Head of caudate nucleus (tissue), 42 donors: ENCODE measurements at regions of chr12 and their contacts with region 1.

Region 1: DNA sequence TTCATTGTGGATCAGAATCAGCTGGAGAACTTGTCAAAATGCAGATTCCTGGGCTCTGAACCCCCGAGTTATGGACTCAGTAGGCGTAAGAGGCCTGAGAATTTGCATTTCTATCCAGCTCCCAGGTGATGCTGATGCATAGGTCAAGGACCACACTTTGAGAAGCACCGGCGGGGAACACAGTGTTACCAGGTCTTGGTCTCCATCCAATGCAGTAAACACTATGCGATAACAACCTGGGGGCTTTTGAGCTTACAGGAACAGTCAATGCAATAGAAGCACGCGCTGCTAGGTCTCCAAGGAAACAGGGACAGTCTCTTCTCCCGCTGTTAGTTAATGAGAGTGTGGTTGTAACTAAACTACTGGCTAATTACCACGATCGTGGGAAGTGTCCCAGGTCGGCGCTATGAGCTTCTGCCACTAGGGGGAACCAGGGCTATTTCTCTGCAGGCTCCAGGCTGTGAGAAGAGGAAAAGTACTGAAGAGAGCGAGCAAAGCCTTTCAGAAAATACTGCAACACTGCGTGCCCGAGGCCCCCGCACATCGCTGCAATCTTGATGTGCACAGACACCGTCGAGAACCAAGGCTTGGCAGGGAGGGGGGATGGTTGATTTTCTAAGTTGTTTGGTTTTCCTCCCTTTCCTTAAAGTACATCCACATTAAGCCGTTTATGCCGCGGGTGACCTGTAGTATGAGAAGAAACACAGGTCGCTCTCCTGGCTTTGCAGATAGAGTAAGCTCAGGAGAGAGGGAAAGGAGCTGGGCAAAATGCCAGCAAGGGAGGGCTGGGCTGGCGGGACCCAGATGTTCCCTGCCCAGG is 52.0 kb upstream of the KCNA1 start:
- DNase-seq: peak; percentile 78 to 95 (median 88)

Region 2: GRCh38 chr12:5003020-5003666 is 145.5 kb after region 1 on chr12:
- intact Hi-C with region 1: loop called (anchors 2 kb)
- DNase-seq: peak; percentile 58 to 93 (median 78)